B cell (primary cell): ENCODE measurements at regions of chr2 and their contacts with region 1.

Region 1: GRCh38 chr2:160406591-160407392 is 86.8 kb downstream of the RBMS1 start:
- DNase-seq: peak; percentile 91
- ATAC-seq: peak; percentile 71
- H3K4me3 ChIP-seq: peak overlapping the region; percentile 53 to 95 (median 84)
- H3K4me3 Mint-ChIP-seq: peak overlapping the region; percentile 90
- H3K27ac ChIP-seq: peak overlapping the region; percentile 63 to 96
- H3K27ac Mint-ChIP-seq: peak overlapping the region; percentile 96
- H3K4me1 ChIP-seq: peaks cover 55 to 56% of the 10 kb centered on the region in 2 donors
- H3K4me1 Mint-ChIP-seq: peaks cover 79% of the 10 kb centered on the region
- H3K27me3 ChIP-seq: no peaks in the 10 kb centered on the region
- H3K27me3 Mint-ChIP-seq: no peaks in the 10 kb centered on the region
- CTCF ChIP-seq: no peak

Region 2: GRCh38 chr2:159904127-159904958 is 502.4 kb before region 1 on chr2:
- CTCF ChIA-PET with region 1: no interaction called
- POLR2A ChIA-PET with region 1: no interaction called
- intact Hi-C with region 1: loop called (anchors 10 kb)
- DNase-seq: peak; percentile 90
- ATAC-seq: peak; percentile 85
- H3K4me3 ChIP-seq: peak within 1 kb of the TSS; percentile 69 to 96 (median 79)
- H3K4me3 Mint-ChIP-seq: peak within 1 kb of the TSS; percentile 100
- H3K27ac ChIP-seq: peak within 1 kb of the TSS; percentile 85 to 87
- H3K27ac Mint-ChIP-seq: peak within 1 kb of the TSS; percentile 99
- H3K4me1 ChIP-seq: peaks cover 7 to 26% of the 10 kb centered on the region in 2 donors
- H3K4me1 Mint-ChIP-seq: peaks cover 41% of the 10 kb centered on the region
- H3K27me3 ChIP-seq: no peaks in the 10 kb centered on the region
- H3K27me3 Mint-ChIP-seq: no peaks in the 10 kb centered on the region
- CTCF ChIP-seq: no peak

Region 3: DNA sequence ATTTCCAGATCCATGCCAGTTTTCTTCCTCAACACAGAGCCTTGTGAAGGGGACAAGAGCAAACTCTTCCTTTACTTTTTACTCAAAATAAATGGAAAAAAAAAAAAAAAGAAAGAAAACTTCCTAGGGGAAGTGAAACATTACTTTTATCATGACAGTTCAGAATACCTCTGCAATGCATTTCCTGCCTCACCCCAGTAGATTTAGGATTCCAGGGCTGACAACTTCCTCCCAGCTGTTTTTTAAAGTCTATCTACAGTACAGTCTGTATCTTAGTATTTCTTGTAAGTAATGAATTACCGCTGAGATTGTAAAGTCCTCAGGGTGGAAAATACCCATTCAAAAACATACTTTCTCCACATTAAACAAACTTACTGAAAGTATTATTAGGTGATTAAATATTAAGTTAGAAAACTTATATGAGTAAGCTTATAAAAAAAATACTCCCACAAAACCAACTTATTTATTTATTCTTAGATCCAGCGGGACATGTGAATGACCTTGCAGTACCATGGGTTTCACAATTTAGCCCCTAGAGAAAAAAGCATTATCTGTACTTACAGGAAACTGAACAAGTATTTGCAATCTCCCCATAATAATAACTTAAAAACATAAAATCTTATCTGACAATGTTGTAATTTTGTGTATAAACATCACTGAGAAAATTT is 30.9 kb before region 1 on chr2:
- CTCF ChIA-PET with region 1: interaction called, 3 read pairs
- POLR2A ChIA-PET with region 1: no interaction called
- intact Hi-C with region 1: loop called (anchors 5 kb)
- DNase-seq: peak; percentile 32
- ATAC-seq: peak; percentile 56
- H3K4me3 ChIP-seq: peak overlapping the region in 1 of 5 experiments; percentile 15
- H3K4me3 Mint-ChIP-seq: no peak overlapping the region
- H3K27ac ChIP-seq: peak overlapping the region in 1 of 2 donors; percentile 21
- H3K27ac Mint-ChIP-seq: no peak overlapping the region
- H3K4me1 ChIP-seq: peaks cover 44 to 53% of the 10 kb centered on the region in 2 donors
- H3K4me1 Mint-ChIP-seq: peaks cover 71% of the 10 kb centered on the region
- H3K27me3 ChIP-seq: no peaks in the 10 kb centered on the region
- H3K27me3 Mint-ChIP-seq: no peaks in the 10 kb centered on the region
- CTCF ChIP-seq: no peak

Region 4: DNA sequence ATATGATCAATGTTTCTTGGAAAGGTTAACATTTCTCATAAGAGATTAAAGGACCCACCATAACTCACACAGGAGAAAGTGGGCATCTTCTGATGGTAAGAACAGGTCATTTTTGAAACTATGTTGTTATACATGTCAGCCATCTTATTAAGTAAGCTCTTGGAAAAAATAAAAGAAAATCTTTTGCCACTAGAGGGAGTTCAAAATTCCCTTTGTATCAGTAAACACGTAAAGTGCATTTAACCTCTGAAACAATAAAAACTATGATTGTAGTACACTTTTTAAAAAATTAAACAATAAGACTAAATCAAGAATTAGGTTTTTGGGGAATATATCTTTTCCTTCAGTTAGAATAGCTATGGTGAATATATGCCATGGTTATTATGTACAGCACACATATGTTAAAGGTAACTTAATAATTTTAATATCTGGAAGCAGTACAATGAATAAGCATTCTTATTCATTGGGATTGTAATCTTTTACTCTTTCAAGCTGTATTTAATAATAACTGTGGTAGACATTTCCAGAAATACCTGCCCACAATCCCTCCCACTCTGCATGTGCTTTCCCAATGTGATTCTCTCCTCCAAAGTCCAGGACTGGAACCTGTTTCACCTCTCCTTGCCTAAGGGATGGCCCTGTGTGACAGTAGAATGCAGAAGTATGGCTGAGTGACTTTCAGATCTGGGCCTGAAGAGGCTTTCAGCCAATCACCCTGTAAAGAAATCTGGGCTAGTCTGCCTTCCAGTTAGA is 22.6 kb after region 1 on chr2:
- CTCF ChIA-PET with region 1: interaction called, 30 read pairs
- POLR2A ChIA-PET with region 1: interaction called, 10 read pairs
- intact Hi-C with region 1: loop called (anchors 2 kb)
- DNase-seq: peak; percentile 70
- ATAC-seq: no peak
- H3K4me3 ChIP-seq: no peak overlapping the region
- H3K4me3 Mint-ChIP-seq: no peak overlapping the region
- H3K27ac ChIP-seq: no peak overlapping the region
- H3K27ac Mint-ChIP-seq: peak overlapping the region; percentile 32
- H3K4me1 ChIP-seq: peaks cover 30 to 35% of the 10 kb centered on the region in 2 donors
- H3K4me1 Mint-ChIP-seq: peaks cover 35% of the 10 kb centered on the region
- H3K27me3 ChIP-seq: no peaks in the 10 kb centered on the region
- H3K27me3 Mint-ChIP-seq: no peaks in the 10 kb centered on the region
- CTCF ChIP-seq: peak; percentile 78

Region 5: DNA sequence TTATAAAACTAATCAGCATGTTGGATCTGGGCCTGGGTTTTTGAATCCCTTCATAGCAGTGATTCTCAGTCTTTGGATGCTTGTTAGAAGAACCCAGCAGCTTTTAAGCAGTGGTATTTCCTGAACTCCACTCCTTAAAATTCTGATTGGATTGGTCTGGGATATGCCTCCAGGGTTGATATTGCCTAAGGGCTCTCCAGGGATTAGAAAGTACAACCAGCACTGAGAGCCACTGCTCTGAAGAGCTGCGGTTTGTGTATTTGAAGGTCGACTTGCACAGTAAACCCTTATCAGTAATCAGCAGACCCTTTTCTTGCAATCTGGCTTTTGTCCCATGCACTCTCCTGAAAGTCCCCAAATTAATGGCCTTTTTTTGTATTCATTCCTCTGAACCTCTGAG is 103.8 kb after region 1 on chr2:
- CTCF ChIA-PET with region 1: no interaction called
- POLR2A ChIA-PET with region 1: no interaction called
- intact Hi-C with region 1: no loop called
- DNase-seq: no peak
- ATAC-seq: no peak
- H3K4me3 ChIP-seq: no peak overlapping the region
- H3K4me3 Mint-ChIP-seq: no peak overlapping the region
- H3K27ac ChIP-seq: no peak overlapping the region
- H3K27ac Mint-ChIP-seq: no peak overlapping the region
- H3K4me1 ChIP-seq: no peaks in the 10 kb centered on the region
- H3K4me1 Mint-ChIP-seq: no peaks in the 10 kb centered on the region
- H3K27me3 ChIP-seq: no peaks in the 10 kb centered on the region
- H3K27me3 Mint-ChIP-seq: peaks cover 8% of the 10 kb centered on the region
- CTCF ChIP-seq: no peak

Region 6: GRCh38 chr2:161136696-161137324 is 730.0 kb after region 1 on chr2:
- CTCF ChIA-PET with region 1: no interaction called
- POLR2A ChIA-PET with region 1: no interaction called
- intact Hi-C with region 1: loop called (anchors 2 kb)
- DNase-seq: peak; percentile 93
- ATAC-seq: peak; percentile 94
- H3K4me3 ChIP-seq: peak overlapping the region; percentile 62 to 94 (median 79)
- H3K4me3 Mint-ChIP-seq: peak overlapping the region; percentile 99
- H3K27ac ChIP-seq: peak overlapping the region; percentile 97 to 100
- H3K27ac Mint-ChIP-seq: peak overlapping the region; percentile 97
- H3K4me1 ChIP-seq: peaks cover 23 to 35% of the 10 kb centered on the region in 2 donors
- H3K4me1 Mint-ChIP-seq: peaks cover 53% of the 10 kb centered on the region
- H3K27me3 ChIP-seq: no peaks in the 10 kb centered on the region
- H3K27me3 Mint-ChIP-seq: no peaks in the 10 kb centered on the region
- CTCF ChIP-seq: no peak

Region 7: GRCh38 chr2:161238560-161239325 is 832.0 kb after region 1 on chr2:
- CTCF ChIA-PET with region 1: no interaction called
- POLR2A ChIA-PET with region 1: no interaction called
- intact Hi-C with region 1: loop called (anchors 5 kb)
- DNase-seq: peak; percentile 66
- ATAC-seq: peak; percentile 54
- H3K4me3 ChIP-seq: peak overlapping the region; percentile 43 to 75 (median 57)
- H3K4me3 Mint-ChIP-seq: peak overlapping the region; percentile 90
- H3K27ac ChIP-seq: no peak overlapping the region
- H3K27ac Mint-ChIP-seq: peak overlapping the region; percentile 60
- H3K4me1 ChIP-seq: peaks cover 17% of the 10 kb centered on the region in 2 donors
- H3K4me1 Mint-ChIP-seq: peaks cover 51% of the 10 kb centered on the region
- H3K27me3 ChIP-seq: peaks cover 0 to 6% (median 0%) of the 10 kb centered on the region in 4 experiments
- H3K27me3 Mint-ChIP-seq: no peaks in the 10 kb centered on the region
- CTCF ChIP-seq: no peak